PC-9 (cell line): ENCODE measurements at regions of chr10 and their contacts with region 1.

Region 1: GRCh38 chr10:60444494-60445064 is 54.9 kb upstream of the ANK3 start:
- DNase-seq: no peak
- H3K4me3 ChIP-seq: no peak overlapping the region
- H3K27ac ChIP-seq: no peak overlapping the region
- H3K4me1 ChIP-seq: peaks cover 13% of the 10 kb centered on the region
- H3K27me3 ChIP-seq: no peaks in the 10 kb centered on the region
- CTCF ChIP-seq: peak; percentile 82

Region 2: GRCh38 chr10:60237977-60238758 is 206.4 kb before region 1 on chr10:
- CTCF ChIA-PET with region 1: interaction called, 14 read pairs
- POLR2A ChIA-PET with region 1: no interaction called
- intact Hi-C with region 1: no loop called
- DNase-seq: peak in 1 of 2 experiments; percentile 34
- H3K4me3 ChIP-seq: no peak overlapping the region
- H3K27ac ChIP-seq: no peak overlapping the region
- H3K4me1 ChIP-seq: no peaks in the 10 kb centered on the region
- H3K27me3 ChIP-seq: no peaks in the 10 kb centered on the region
- CTCF ChIP-seq: peak; percentile 53

Region 3: DNA sequence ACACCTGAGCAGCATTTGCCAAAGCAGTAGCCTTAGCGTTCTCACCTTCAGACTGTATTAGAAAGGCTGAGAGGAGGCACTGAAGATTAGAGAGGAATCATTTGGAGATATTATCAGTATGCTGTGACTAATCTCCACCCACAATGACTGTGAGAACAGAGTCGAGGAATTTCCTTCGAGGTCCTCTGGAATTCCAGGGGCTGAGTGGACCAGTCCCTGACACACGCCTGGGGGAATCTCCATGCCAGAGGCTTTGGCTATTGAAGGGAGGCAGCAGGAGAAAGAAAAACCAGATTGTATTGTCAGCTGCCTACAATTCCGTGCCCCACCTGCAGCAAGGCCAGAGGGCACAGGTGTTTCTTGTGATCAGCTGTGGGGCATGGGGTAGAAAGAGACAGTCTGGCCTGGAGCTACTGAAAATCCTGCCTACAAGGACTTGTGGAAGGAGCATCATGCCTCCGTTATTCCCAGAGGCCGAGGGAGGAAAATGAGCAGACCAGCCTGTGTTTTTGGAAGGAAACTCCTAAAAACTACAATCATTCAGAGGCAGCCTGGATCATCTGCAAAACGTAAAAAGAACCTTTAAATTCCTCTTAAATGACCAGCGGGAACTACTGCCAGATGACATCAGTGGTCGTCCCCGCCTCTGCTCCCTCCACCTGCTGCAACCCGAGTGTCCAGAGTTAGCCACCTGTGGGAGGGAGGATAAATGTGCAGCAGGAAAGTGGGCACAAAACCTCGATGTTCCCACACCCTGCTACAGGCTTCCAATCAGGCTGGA is 29.6 kb before region 1 on chr10:
- CTCF ChIA-PET with region 1: no interaction called
- POLR2A ChIA-PET with region 1: no interaction called
- intact Hi-C with region 1: no loop called
- DNase-seq: peak; percentile 90 to 99
- H3K4me3 ChIP-seq: no peak overlapping the region; the same call in 1 of the 2 replicates
- H3K27ac ChIP-seq: peak overlapping the region; percentile 61
- H3K4me1 ChIP-seq: peaks cover 62% of the 10 kb centered on the region
- H3K27me3 ChIP-seq: no peaks in the 10 kb centered on the region
- CTCF ChIP-seq: no peak

Region 4: GRCh38 chr10:60466267-60467201 is 22.0 kb after region 1 on chr10:
- CTCF ChIA-PET with region 1: no interaction called
- POLR2A ChIA-PET with region 1: no interaction called
- intact Hi-C with region 1: no loop called
- DNase-seq: peak in 1 of 2 experiments; percentile 80
- H3K4me3 ChIP-seq: no peak overlapping the region
- H3K27ac ChIP-seq: peak overlapping the region; percentile 70
- H3K4me1 ChIP-seq: peaks cover 31% of the 10 kb centered on the region
- H3K27me3 ChIP-seq: no peaks in the 10 kb centered on the region
- CTCF ChIP-seq: no peak

Region 5: DNA sequence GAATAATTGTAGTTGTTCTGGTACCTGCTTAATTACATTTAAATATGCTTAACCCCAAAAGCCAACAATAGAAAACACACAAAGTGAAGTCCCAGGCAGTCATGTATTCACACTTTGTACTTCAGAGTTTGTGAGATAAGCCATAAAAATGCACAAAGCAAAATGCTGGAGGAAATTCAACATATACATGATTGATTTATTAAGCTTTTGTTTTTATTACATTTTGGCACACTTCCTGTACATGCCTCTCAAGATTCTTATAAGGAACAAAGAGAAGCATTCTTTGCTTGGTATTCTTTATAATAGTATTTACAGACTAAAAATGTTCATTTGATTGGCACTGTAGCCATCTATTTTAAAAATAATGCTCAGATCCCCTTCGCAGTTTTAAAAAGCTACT is 52.8 kb after region 1 on chr10:
- CTCF ChIA-PET with region 1: no interaction called
- POLR2A ChIA-PET with region 1: no interaction called
- intact Hi-C with region 1: no loop called
- DNase-seq: peak in 1 of 2 experiments; percentile 28
- H3K4me3 ChIP-seq: no peak overlapping the region
- H3K27ac ChIP-seq: no peak overlapping the region
- H3K4me1 ChIP-seq: no peaks in the 10 kb centered on the region
- H3K27me3 ChIP-seq: no peaks in the 10 kb centered on the region
- CTCF ChIP-seq: no peak

Region 6: DNA sequence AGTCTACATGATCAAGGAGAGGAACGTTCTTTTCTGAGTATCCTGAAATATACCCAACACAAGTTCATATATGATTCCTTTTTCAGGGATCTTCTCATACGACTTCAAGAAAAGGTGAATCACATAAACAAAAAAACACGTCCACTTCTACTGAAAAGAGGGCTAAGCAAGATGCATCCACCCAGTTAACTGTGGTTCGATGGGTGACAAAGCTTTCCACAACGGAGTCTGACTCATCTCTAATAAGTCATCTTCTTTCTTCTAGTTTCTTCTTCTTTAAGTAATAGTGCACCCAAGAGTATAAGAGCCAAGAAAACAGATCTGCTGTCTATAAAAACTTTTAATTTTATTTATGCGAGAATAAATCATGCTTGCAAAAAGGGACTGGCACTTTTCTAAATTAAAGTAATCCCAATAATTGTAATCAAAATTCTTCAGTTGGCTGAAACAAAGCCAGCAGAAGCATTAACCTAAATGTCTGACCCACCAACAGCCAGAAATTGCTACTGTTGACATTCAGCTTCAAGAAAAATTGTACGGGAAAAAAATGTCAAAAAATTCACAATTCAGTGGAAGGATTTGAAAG is 92.0 kb after region 1 on chr10:
- CTCF ChIA-PET with region 1: no interaction called
- POLR2A ChIA-PET with region 1: no interaction called
- intact Hi-C with region 1: loop called (anchors 5 kb)
- DNase-seq: no peak
- H3K4me3 ChIP-seq: no peak overlapping the region
- H3K27ac ChIP-seq: no peak overlapping the region
- H3K4me1 ChIP-seq: peaks cover 12% of the 10 kb centered on the region
- H3K27me3 ChIP-seq: no peaks in the 10 kb centered on the region
- CTCF ChIP-seq: no peak

Region 7: DNA sequence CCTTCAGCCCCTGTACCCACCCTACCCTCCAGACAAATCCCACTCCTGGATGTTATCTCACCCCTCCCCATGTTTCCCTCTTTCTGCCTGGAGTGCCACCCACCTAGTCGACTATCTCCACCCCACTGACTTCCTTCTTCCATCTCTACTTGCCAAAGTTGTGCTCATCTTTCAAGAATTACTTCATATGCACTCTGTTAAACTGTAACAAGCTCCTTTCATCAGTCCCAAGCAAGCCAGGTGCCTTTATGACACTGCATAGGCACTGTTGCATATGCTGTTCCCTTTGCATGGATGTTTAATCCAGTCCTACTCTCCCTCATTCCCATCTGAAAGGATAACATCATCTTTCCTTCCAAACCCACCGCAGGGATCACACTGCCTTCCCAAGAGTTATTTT is 324.8 kb after region 1 on chr10:
- CTCF ChIA-PET with region 1: no interaction called
- POLR2A ChIA-PET with region 1: no interaction called
- intact Hi-C with region 1: loop called (anchors 1 kb)
- DNase-seq: no peak
- H3K4me3 ChIP-seq: no peak overlapping the region
- H3K27ac ChIP-seq: no peak overlapping the region
- H3K4me1 ChIP-seq: no peaks in the 10 kb centered on the region
- H3K27me3 ChIP-seq: no peaks in the 10 kb centered on the region
- CTCF ChIP-seq: no peak

Region 8: GRCh38 chr10:61284222-61284890 is 839.8 kb after region 1 on chr10:
- CTCF ChIA-PET with region 1: no interaction called
- POLR2A ChIA-PET with region 1: no interaction called
- intact Hi-C with region 1: loop called (anchors 10 kb)
- DNase-seq: peak in 1 of 2 experiments; percentile 74
- H3K4me3 ChIP-seq: 0 out of 2 replicates have a peak overlapping the region, but pooled peaks have one; percentile 14
- H3K27ac ChIP-seq: 0 out of 2 replicates have a peak overlapping the region, but pooled peaks have one; percentile 9
- H3K4me1 ChIP-seq: peaks cover 6% of the 10 kb centered on the region; the same call in 1 of the 2 replicates
- H3K27me3 ChIP-seq: no peaks in the 10 kb centered on the region
- CTCF ChIP-seq: peak; percentile 91

Region 9: GRCh38 chr10:61423178-61423577 is 978.6 kb after region 1 on chr10:
- CTCF ChIA-PET with region 1: no interaction called
- POLR2A ChIA-PET with region 1: no interaction called
- intact Hi-C with region 1: no loop called
- DNase-seq: no peak
- H3K4me3 ChIP-seq: no peak overlapping the region
- H3K27ac ChIP-seq: no peak overlapping the region
- H3K4me1 ChIP-seq: no peaks in the 10 kb centered on the region
- H3K27me3 ChIP-seq: no peaks in the 10 kb centered on the region
- CTCF ChIP-seq: no peak